Endothelial cell of umbilical vein (primary cell): ENCODE measurements at regions of chr2 and their contacts with region 1.

Region 1: DNA sequence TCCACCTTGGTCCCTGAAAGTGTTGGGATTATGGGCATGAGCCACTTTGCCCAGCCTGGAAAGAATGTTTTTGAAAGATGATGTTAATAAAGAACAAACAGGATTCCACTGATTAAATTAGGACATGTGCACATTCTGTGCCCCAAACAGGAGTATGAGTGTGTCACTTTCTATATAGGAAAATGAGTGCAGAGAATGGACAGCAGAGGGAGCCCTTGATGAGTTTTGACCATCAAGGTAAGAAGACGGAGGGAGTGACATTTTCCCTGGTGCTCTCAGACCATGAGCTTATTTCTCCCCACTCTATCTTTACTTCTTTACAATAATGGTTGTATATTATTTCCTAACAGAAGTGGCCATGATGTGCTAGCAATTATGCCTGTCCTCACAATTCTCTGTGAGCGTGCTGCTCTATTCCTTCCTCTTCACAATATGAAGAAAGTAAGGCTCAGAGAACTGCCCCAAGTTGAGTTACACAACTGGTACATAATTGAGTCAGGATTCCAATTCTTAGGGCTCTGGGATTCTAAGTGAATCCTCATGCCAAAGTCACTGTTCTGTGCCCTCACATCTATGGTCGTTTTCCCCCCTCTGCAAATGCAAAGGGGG is 20.6 kb downstream of the RPL37A start:
- DNase-seq: peak; percentile 77
- H3K4me3 ChIP-seq: no peak overlapping the region
- H3K27ac ChIP-seq: no peak overlapping the region
- H3K4me1 ChIP-seq: no peaks in the 10 kb centered on the region
- H3K27me3 ChIP-seq: no peaks in the 10 kb centered on the region
- CTCF ChIP-seq: peak; percentile 64 to 66
- POLR2A ChIP-seq: no peak

Region 2: GRCh38 chr2:215136669-215137328 is 1382.5 kb before region 1 on chr2:
- CTCF ChIA-PET with region 1: no interaction called
- POLR2A ChIA-PET with region 1: no interaction called
- dilution Hi-C with region 1: no loop called
- intact Hi-C with region 1: no loop called
- DNase-seq: no peak
- H3K4me3 ChIP-seq: no peak overlapping the region
- H3K27ac ChIP-seq: no peak overlapping the region
- H3K4me1 ChIP-seq: no peaks in the 10 kb centered on the region
- H3K27me3 ChIP-seq: peaks cover 0 to 2% of the 10 kb centered on the region in 2 experiments
- CTCF ChIP-seq: no peak
- POLR2A ChIP-seq: no peak

Region 3: GRCh38 chr2:216491793-216492596 is 27.3 kb before region 1 on chr2:
- CTCF ChIA-PET with region 1: no interaction called
- POLR2A ChIA-PET with region 1: no interaction called
- dilution Hi-C with region 1: no loop called
- intact Hi-C with region 1: no loop called
- DNase-seq: no peak
- H3K4me3 ChIP-seq: no peak overlapping the region
- H3K27ac ChIP-seq: peak overlapping the region; percentile 25
- H3K4me1 ChIP-seq: peaks cover 48% of the 10 kb centered on the region
- H3K27me3 ChIP-seq: no peaks in the 10 kb centered on the region
- CTCF ChIP-seq: no peak
- POLR2A ChIP-seq: no peak

Region 4: GRCh38 chr2:216545359-216545758 is 26.1 kb after region 1 on chr2:
- CTCF ChIA-PET with region 1: interaction called, 13 read pairs
- POLR2A ChIA-PET with region 1: no interaction called
- dilution Hi-C with region 1: no loop called
- intact Hi-C with region 1: no loop called
- DNase-seq: peak; percentile 22
- H3K4me3 ChIP-seq: no peak overlapping the region
- H3K27ac ChIP-seq: no peak overlapping the region
- H3K4me1 ChIP-seq: peaks cover 4% of the 10 kb centered on the region
- H3K27me3 ChIP-seq: no peaks in the 10 kb centered on the region
- CTCF ChIP-seq: no peak
- POLR2A ChIP-seq: no peak

Region 5: GRCh38 chr2:216618785-216619184 is 99.5 kb after region 1 on chr2:
- CTCF ChIA-PET with region 1: interaction called, 11 read pairs
- POLR2A ChIA-PET with region 1: no interaction called
- dilution Hi-C with region 1: no loop called
- intact Hi-C with region 1: no loop called
- DNase-seq: no peak
- H3K4me3 ChIP-seq: no peak overlapping the region
- H3K27ac ChIP-seq: no peak overlapping the region
- H3K4me1 ChIP-seq: no peaks in the 10 kb centered on the region
- H3K27me3 ChIP-seq: peaks cover 3 to 5% of the 10 kb centered on the region in 2 experiments
- CTCF ChIP-seq: no peak
- POLR2A ChIP-seq: no peak

Region 6: DNA sequence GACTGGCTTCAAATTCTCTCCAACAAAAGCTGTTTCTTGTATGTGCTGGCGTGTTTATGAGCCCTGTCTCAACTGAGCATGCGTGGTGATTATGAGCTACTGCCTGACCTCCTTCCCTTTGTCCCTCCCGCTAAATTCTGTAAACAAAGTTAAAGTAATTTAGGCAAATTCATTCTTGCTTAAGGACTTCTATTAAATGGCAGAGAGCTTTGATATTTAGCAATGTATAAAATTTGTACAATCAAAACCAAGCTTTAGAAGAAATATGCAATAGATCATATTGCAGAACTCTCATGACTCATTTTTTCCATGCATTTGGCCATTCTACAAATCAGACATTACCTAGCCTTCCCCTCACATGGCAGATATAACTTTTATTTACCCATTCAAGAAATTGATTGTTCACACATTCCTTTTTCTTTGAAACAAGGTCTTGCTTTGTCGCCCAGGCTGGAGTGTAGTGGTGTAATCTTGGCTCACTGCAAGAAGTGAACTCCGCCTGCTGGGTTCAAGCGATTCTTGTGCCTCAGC is 132.2 kb after region 1 on chr2:
- CTCF ChIA-PET with region 1: interaction called, 24 read pairs
- POLR2A ChIA-PET with region 1: no interaction called
- dilution Hi-C with region 1: loop called (anchors 10 kb)
- intact Hi-C with region 1: no loop called
- DNase-seq: peak; percentile 55
- H3K4me3 ChIP-seq: no peak overlapping the region
- H3K27ac ChIP-seq: no peak overlapping the region
- H3K4me1 ChIP-seq: peaks cover 17% of the 10 kb centered on the region
- H3K27me3 ChIP-seq: no peaks in the 10 kb centered on the region
- CTCF ChIP-seq: no peak
- POLR2A ChIP-seq: no peak

Region 7: DNA sequence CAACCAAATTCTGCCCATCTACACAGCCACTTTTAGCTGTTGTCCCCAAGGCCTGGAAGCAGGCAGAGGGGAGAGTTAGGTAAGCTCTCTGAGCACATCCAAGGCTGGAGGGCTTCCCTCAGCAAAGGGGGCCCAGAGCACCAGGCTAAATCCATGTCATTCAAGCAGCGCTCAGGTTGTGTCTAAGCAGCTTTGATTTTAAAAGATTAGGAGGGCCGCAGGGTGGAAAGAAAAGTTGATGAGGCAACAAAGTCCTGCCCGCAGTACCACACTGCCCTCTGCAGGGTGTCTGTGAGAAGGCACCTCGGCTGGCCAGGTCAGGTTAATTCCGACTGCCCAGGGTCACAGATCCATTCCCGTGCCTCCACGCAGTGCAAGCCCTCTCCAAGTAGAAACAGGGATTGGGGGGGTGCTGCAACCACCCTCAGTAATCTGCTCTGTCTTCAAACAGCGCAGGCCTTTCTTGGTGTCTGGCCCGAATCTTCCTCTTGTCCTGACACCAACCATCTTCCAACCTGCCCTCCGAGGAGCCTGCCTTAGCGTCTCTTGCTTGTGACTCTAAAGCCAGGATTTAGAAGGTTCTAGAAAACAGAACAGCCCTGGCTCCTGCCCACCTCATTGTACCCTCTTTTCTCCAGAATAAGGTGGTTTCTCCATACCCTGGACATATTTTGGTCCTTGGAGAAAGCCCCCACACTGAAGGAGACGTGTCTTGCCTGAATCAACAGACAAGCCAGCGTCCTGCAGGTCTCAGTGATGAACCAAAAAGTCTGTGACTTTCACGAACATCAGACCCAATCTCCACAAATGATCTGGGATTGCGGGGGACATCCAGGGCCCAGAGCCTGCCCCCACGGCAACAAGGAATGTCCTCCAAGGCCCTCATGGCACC is 1194.4 kb after region 1 on chr2:
- CTCF ChIA-PET with region 1: interaction called, 10 read pairs
- POLR2A ChIA-PET with region 1: no interaction called
- dilution Hi-C with region 1: no loop called
- intact Hi-C with region 1: loop called (anchors 5 kb)
- DNase-seq: peak; percentile 55
- H3K4me3 ChIP-seq: no peak overlapping the region
- H3K27ac ChIP-seq: no peak overlapping the region
- H3K4me1 ChIP-seq: no peaks in the 10 kb centered on the region
- H3K27me3 ChIP-seq: peaks cover 0 to 5% of the 10 kb centered on the region in 2 experiments
- CTCF ChIP-seq: peak; percentile 77 to 94
- POLR2A ChIP-seq: no peak